ENCODE measurements at regions of chr1 and their contacts with region 1.

Region 1: GRCh38 chr1:94805912-94806311 is 14.2 kb upstream of the SLC44A3 start:
- DNase-seq: peak; percentile 68
- H3K4me3 Mint-ChIP-seq: no peak overlapping the region
- H3K27ac Mint-ChIP-seq: no peak overlapping the region
- H3K4me1 Mint-ChIP-seq: peaks cover 16% of the 10 kb centered on the region
- H3K27me3 Mint-ChIP-seq: no peaks in the 10 kb centered on the region
- CTCF ChIP-seq: peak; percentile 96

Region 2: DNA sequence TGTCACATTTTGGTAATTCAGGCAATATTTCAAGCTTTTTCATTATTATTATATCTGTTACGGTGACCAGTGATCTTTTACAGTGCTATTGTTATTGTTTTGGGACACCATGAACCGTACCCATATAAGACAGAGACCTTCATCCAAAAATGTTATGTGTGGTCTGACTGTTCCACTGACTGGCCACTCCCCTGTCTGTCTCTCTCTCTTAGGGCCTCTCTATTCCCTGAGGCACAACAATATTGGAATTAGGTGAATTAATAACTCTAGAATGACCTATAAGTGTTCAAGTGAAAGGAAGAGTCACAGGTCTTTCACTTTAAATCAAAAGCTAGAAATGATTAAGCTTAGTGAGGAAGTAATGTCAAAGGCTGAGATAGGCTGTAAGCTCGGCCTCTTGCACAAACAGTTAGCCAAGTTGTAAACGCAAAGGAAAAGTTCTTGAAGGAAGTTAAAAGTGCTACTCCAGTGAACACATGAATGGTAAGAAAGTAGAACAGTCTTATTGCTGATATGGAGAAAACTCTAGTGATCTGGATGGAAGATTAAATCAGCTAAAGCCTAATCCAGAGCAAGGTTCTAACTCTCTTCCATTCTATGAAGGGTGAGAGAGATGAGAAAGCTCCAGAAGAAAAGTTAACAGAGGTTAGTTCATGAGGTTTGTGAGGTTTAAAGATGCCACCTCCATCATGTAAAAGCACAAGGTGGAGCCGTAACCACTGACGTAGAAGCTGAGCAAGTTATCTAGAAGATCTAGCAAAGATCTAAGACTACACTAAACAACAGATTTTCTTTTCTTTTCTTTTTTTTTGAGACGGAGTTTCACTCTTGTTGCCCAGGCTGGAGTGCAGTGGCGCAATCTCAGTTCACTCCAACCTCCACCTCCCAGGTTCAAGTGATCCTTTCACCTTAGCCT is 1824.9 kb before region 1 on chr1:
- CTCF ChIA-PET with region 1: no interaction called
- POLR2A ChIA-PET with region 1: no interaction called
- intact Hi-C with region 1: no loop called
- DNase-seq: no peak
- H3K4me3 Mint-ChIP-seq: no peak overlapping the region
- H3K27ac Mint-ChIP-seq: no peak overlapping the region
- H3K4me1 Mint-ChIP-seq: no peaks in the 10 kb centered on the region
- H3K27me3 Mint-ChIP-seq: no peaks in the 10 kb centered on the region
- CTCF ChIP-seq: no peak

Region 3: GRCh38 chr1:94463765-94464330 is 342.1 kb before region 1 on chr1:
- CTCF ChIA-PET with region 1: interaction called, 10 read pairs
- POLR2A ChIA-PET with region 1: no interaction called
- intact Hi-C with region 1: no loop called
- DNase-seq: peak; percentile 60
- H3K4me3 Mint-ChIP-seq: no peak overlapping the region
- H3K27ac Mint-ChIP-seq: no peak overlapping the region
- H3K4me1 Mint-ChIP-seq: peaks cover 6% of the 10 kb centered on the region
- H3K27me3 Mint-ChIP-seq: no peaks in the 10 kb centered on the region
- CTCF ChIP-seq: peak; percentile 51

Region 4: GRCh38 chr1:94486990-94487389 is 318.9 kb before region 1 on chr1:
- CTCF ChIA-PET with region 1: interaction called, 100 read pairs
- POLR2A ChIA-PET with region 1: no interaction called
- intact Hi-C with region 1: no loop called
- DNase-seq: no peak
- H3K4me3 Mint-ChIP-seq: no peak overlapping the region
- H3K27ac Mint-ChIP-seq: no peak overlapping the region
- H3K4me1 Mint-ChIP-seq: no peaks in the 10 kb centered on the region
- H3K27me3 Mint-ChIP-seq: no peaks in the 10 kb centered on the region
- CTCF ChIP-seq: no peak

Region 5: GRCh38 chr1:94522304-94522703 is 283.6 kb before region 1 on chr1:
- CTCF ChIA-PET with region 1: interaction called, 457 read pairs
- POLR2A ChIA-PET with region 1: interaction called, 6 read pairs
- intact Hi-C with region 1: loop called (anchors 1 kb)
- DNase-seq: peak; percentile 65
- H3K4me3 Mint-ChIP-seq: no peak overlapping the region
- H3K27ac Mint-ChIP-seq: no peak overlapping the region
- H3K4me1 Mint-ChIP-seq: peaks cover 6% of the 10 kb centered on the region
- H3K27me3 Mint-ChIP-seq: no peaks in the 10 kb centered on the region
- CTCF ChIP-seq: peak; percentile 32

Region 6: DNA sequence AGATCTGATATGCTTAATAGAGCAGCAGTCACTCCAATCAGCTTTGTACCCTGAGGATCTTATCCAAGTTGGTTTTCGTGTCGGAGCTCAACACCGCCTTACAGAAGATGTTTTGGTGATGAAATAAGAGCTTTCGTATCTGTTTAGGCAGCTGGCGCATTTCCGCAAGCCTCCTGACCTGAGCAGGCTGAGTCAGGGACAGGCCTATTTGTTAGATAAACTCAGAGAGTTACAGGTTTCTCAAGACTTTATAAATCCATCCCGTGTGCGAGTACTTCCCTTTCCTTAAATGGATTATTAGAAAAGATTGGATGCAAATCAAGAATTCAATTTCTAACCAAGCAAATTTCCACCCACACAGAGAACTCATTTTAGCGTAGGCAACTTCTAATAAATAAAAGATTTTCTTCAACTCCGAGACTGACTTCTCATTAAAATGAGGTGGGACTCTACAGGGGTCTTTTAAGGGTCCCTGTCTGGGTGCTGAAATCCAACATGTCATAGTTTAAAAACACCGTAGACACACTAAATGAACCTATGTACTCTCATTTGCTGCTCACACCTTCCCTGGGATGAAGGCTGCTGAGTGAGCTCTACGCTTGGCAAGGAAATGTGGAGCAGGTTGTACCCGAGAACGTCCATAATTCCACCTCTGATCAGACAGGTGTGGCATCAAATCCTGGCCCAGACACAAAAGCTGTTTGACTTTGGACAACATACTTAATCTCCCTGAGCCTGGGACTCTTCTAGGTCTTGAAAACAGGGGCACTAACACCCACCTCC is 157.5 kb before region 1 on chr1:
- CTCF ChIA-PET with region 1: interaction called, 6 read pairs
- POLR2A ChIA-PET with region 1: no interaction called
- intact Hi-C with region 1: loop called (anchors 5 kb)
- DNase-seq: peak; percentile 94
- H3K4me3 Mint-ChIP-seq: peak overlapping the region; percentile 56
- H3K27ac Mint-ChIP-seq: peak overlapping the region; percentile 93
- H3K4me1 Mint-ChIP-seq: peaks cover 25% of the 10 kb centered on the region
- H3K27me3 Mint-ChIP-seq: no peaks in the 10 kb centered on the region
- CTCF ChIP-seq: no peak

Region 7: GRCh38 chr1:94819941-94820746 is 14.2 kb after region 1 on chr1 and contains the start of gene SLC44A3:
- CTCF ChIA-PET with region 1: interaction called, 18 read pairs
- POLR2A ChIA-PET with region 1: interaction called, 3 read pairs
- intact Hi-C with region 1: no loop called
- DNase-seq: peak; percentile 51
- H3K4me3 Mint-ChIP-seq: peak within 1 kb of the TSS; percentile 69
- H3K27ac Mint-ChIP-seq: no peak within 1 kb of the TSS
- H3K4me1 Mint-ChIP-seq: peaks cover 6% of the 10 kb centered on the region
- H3K27me3 Mint-ChIP-seq: no peaks in the 10 kb centered on the region
- CTCF ChIP-seq: peak; percentile 30
- total RNA-seq, gene SLC44A3: 0.83 and 2.8 TPM in 2 replicates

Region 8: GRCh38 chr1:95043141-95043980 is 237.4 kb after region 1 on chr1:
- CTCF ChIA-PET with region 1: interaction called, 26 read pairs
- POLR2A ChIA-PET with region 1: no interaction called
- intact Hi-C with region 1: loop called (anchors 5 kb)
- DNase-seq: peak; percentile 82
- H3K4me3 Mint-ChIP-seq: no peak overlapping the region
- H3K27ac Mint-ChIP-seq: no peak overlapping the region
- H3K4me1 Mint-ChIP-seq: peaks cover 10% of the 10 kb centered on the region
- H3K27me3 Mint-ChIP-seq: no peaks in the 10 kb centered on the region
- CTCF ChIP-seq: peak; percentile 98

Measured in MCF 10A (cell line).